CD4-positive, alpha-beta memory T cell (primary cell): ENCODE measurements at regions of chr5 and their contacts with region 1.

Region 1: GRCh38 chr5:42994246-42995151 is 45.6 kb downstream of the ANXA2R start:
- DNase-seq: peak; percentile 86 to 89 (median 88)
- H3K4me3 ChIP-seq: peak overlapping the region; percentile 72 to 76
- H3K4me3 Mint-ChIP-seq: peak overlapping the region; percentile 93 to 100 (median 100)
- H3K27ac ChIP-seq: peak overlapping the region; percentile 93
- H3K27ac Mint-ChIP-seq: peak overlapping the region; percentile 98 to 100 (median 100)
- H3K4me1 ChIP-seq: peaks cover 34% of the 10 kb centered on the region
- H3K4me1 Mint-ChIP-seq: peaks cover 14 to 69% (median 26%) of the 10 kb centered on the region in 4 donors
- H3K27me3 ChIP-seq: no peaks in the 10 kb centered on the region
- H3K27me3 Mint-ChIP-seq: no peaks in the 10 kb centered on the region

Region 2: GRCh38 chr5:42970636-42971559 is 23.6 kb before region 1 on chr5:
- CTCF ChIA-PET with region 1: interaction called, 4 read pairs
- POLR2A ChIA-PET with region 1: interaction called, 16 read pairs
- intact Hi-C with region 1: loop called (anchors 2 kb)
- DNase-seq: no peak
- H3K4me3 ChIP-seq: no peak overlapping the region
- H3K4me3 Mint-ChIP-seq: no peak overlapping the region
- H3K27ac ChIP-seq: no peak overlapping the region
- H3K27ac Mint-ChIP-seq: peak overlapping the region in 2 of 7 donors; percentile 35 to 61
- H3K4me1 ChIP-seq: peaks cover 3% of the 10 kb centered on the region
- H3K4me1 Mint-ChIP-seq: peaks cover 5 to 7% (median 6%) of the 10 kb centered on the region in 4 donors
- H3K27me3 ChIP-seq: no peaks in the 10 kb centered on the region
- H3K27me3 Mint-ChIP-seq: no peaks in the 10 kb centered on the region

Region 3: DNA sequence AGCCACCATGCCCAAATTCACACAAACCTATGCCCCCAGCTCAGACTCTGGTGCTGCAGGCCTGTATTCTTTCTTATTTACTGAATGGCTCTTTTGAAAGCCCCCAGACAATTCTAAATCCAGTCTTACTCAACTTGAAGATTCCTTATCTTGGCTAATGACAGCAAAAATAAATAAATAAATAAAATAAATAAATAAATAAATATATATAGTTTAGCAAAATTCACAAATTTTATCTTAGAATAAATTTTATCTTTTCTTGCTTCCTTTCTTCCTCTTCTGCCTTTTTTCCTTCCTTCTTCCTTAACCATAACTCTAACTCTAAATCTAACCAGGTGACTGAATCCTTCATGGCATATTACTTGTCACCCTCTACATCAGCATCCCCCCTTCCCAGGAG is 20.0 kb after region 1 on chr5:
- CTCF ChIA-PET with region 1: interaction called, 226 read pairs
- POLR2A ChIA-PET with region 1: interaction called, 991 read pairs
- intact Hi-C with region 1: no loop called
- DNase-seq: no peak
- H3K4me3 ChIP-seq: no peak overlapping the region
- H3K4me3 Mint-ChIP-seq: peak overlapping the region in 4 of 8 donors; percentile 15 to 99 (median 97)
- H3K27ac ChIP-seq: no peak overlapping the region
- H3K27ac Mint-ChIP-seq: peak overlapping the region in 5 of 7 donors; percentile 37 to 100 (median 71)
- H3K4me1 ChIP-seq: peaks cover 56% of the 10 kb centered on the region
- H3K4me1 Mint-ChIP-seq: peaks cover 35 to 71% (median 51%) of the 10 kb centered on the region in 4 donors
- H3K27me3 ChIP-seq: no peaks in the 10 kb centered on the region
- H3K27me3 Mint-ChIP-seq: no peaks in the 10 kb centered on the region

Region 4: GRCh38 chr5:43040287-43041098 is 46.0 kb after region 1 on chr5 and contains the start of gene ANXA2R:
- CTCF ChIA-PET with region 1: interaction called, 117 read pairs
- POLR2A ChIA-PET with region 1: interaction called, 836 read pairs
- intact Hi-C with region 1: loop called (anchors 1 kb)
- DNase-seq: peak; percentile 94 to 97 (median 97)
- H3K4me3 ChIP-seq: peak within 1 kb of the TSS; percentile 78 to 99
- H3K4me3 Mint-ChIP-seq: peak within 1 kb of the TSS; percentile 97 to 100 (median 98)
- H3K27ac ChIP-seq: peak within 1 kb of the TSS; percentile 98
- H3K27ac Mint-ChIP-seq: peak within 1 kb of the TSS; percentile 99 to 100 (median 99)
- H3K4me1 ChIP-seq: peaks cover 50% of the 10 kb centered on the region
- H3K4me1 Mint-ChIP-seq: peaks cover 19 to 82% (median 39%) of the 10 kb centered on the region in 4 donors
- H3K27me3 ChIP-seq: no peaks in the 10 kb centered on the region
- H3K27me3 Mint-ChIP-seq: no peaks in the 10 kb centered on the region
- total RNA-seq, gene ANXA2R: 43.4 to 47.8 TPM

Region 5: GRCh38 chr5:43085453-43085852 is 91.0 kb after region 1 on chr5:
- CTCF ChIA-PET with region 1: no interaction called
- POLR2A ChIA-PET with region 1: no interaction called
- intact Hi-C with region 1: no loop called
- DNase-seq: no peak
- H3K4me3 ChIP-seq: no peak overlapping the region
- H3K4me3 Mint-ChIP-seq: no peak overlapping the region
- H3K27ac ChIP-seq: no peak overlapping the region
- H3K27ac Mint-ChIP-seq: no peak overlapping the region
- H3K4me1 ChIP-seq: no peaks in the 10 kb centered on the region
- H3K4me1 Mint-ChIP-seq: peaks cover 0 to 2% (median 0%) of the 10 kb centered on the region in 4 donors
- H3K27me3 ChIP-seq: no peaks in the 10 kb centered on the region
- H3K27me3 Mint-ChIP-seq: no peaks in the 10 kb centered on the region

Region 6: GRCh38 chr5:43105369-43106289 is 111.1 kb after region 1 on chr5:
- CTCF ChIA-PET with region 1: interaction called, 3 read pairs
- POLR2A ChIA-PET with region 1: interaction called, 6 read pairs
- intact Hi-C with region 1: loop called (anchors 1 kb)
- DNase-seq: peak; percentile 87 to 90 (median 88)
- H3K4me3 ChIP-seq: peak overlapping the region; percentile 62 to 87
- H3K4me3 Mint-ChIP-seq: peak overlapping the region; percentile 85 to 94 (median 88)
- H3K27ac ChIP-seq: peak overlapping the region; percentile 44
- H3K27ac Mint-ChIP-seq: peak overlapping the region; percentile 84 to 94 (median 92)
- H3K4me1 ChIP-seq: peaks cover 43% of the 10 kb centered on the region
- H3K4me1 Mint-ChIP-seq: peaks cover 28 to 45% (median 37%) of the 10 kb centered on the region in 4 donors
- H3K27me3 ChIP-seq: no peaks in the 10 kb centered on the region
- H3K27me3 Mint-ChIP-seq: no peaks in the 10 kb centered on the region

Region 7: GRCh38 chr5:43150748-43151147 is 156.2 kb after region 1 on chr5:
- CTCF ChIA-PET with region 1: no interaction called
- POLR2A ChIA-PET with region 1: no interaction called
- intact Hi-C with region 1: no loop called
- DNase-seq: no peak
- H3K4me3 ChIP-seq: no peak overlapping the region
- H3K4me3 Mint-ChIP-seq: no peak overlapping the region
- H3K27ac ChIP-seq: no peak overlapping the region
- H3K27ac Mint-ChIP-seq: no peak overlapping the region
- H3K4me1 ChIP-seq: no peaks in the 10 kb centered on the region
- H3K4me1 Mint-ChIP-seq: peaks cover 6 to 25% (median 9%) of the 10 kb centered on the region in 4 donors
- H3K27me3 ChIP-seq: no peaks in the 10 kb centered on the region
- H3K27me3 Mint-ChIP-seq: no peaks in the 10 kb centered on the region